Activated B cell treated with CpG ODN at 0.5 μM for 24 hours (primary cell): ENCODE measurements at regions of chr14 and their contacts with region 1.

Region 1: DNA sequence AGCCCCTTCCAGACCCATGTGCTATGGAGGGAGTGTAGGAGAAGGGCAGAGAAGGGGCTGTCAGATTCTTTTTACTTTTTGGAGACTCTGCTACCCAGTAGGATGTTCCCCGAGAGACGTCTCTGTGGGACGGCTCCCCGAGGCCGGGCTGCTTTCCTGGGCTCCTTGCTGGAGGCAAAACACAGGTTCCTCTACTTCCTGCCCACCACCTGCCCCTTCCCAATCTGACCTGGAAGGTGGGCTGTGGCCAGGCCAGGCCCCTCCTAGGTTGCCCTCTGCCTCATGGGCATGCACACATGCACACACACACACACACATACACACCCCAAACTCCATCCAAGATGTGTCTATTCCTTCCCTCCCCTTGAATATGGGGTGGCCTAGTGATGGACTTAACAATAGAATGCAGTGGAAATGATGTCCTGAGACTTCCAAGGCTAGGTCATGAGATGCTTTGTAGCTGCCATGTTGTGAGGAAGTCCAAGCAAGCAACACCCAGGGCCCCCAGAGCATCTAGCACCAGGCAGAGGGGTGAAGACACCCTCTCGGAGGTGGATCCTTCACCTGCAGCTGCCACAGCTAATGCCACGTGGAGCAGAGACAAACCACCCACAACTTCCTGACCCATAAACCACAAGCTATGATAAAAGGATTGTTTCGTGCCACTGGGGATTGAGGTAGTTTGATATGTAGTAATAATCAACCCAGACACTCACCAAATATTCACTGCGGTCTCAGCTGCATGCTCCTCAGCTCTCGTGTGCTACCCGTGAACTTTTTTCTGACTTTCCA is 1.6 kb upstream of the ASB2 start:
- DNase-seq: peak; percentile 40
- ATAC-seq: peak; percentile 84
- H3K4me3 Mint-ChIP-seq: peak overlapping the region; percentile 41
- H3K27ac Mint-ChIP-seq: peak overlapping the region; percentile 68
- H3K4me1 Mint-ChIP-seq: peaks cover 40% of the 10 kb centered on the region
- H3K27me3 Mint-ChIP-seq: peaks cover 29% of the 10 kb centered on the region
- CTCF ChIP-seq: no peak

Region 2: DNA sequence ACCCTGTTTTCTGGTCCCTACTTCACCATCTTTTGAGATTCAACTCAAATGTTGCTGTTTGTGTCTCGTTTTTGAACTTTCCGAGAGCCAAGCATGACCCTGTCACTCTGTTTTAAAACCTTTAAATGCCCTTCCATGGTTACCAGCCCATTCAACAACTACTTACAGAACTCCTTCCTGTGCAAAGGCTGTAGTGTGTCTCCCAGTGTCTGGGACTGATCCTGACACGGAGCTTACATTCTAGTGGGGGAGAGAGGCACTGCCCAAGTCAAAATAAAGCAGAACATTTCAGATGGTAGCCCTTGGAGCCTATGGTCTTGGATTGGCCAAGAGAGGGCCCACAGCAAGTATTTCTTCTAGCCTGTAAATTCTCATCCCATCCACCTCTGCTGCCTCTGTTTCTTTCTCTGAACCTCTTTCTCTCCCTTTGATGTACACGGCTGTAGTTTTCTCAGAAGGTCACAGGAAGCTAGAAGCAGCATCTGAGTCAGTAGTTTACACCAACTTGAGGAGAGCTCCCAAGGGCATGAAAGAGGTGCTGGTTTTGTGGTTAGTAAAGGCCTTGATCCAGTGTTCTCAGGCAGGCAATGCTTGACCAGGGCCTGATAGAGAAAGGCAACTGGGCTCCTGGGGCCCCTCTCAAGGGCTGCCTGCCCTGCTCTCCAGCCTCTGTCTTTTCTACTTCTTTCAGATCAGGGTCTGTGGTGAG is 1697.3 kb before region 1 on chr14:
- CTCF ChIA-PET with region 1: no interaction called
- POLR2A ChIA-PET with region 1: no interaction called
- intact Hi-C with region 1: no loop called
- DNase-seq: no peak
- ATAC-seq: no peak
- H3K4me3 Mint-ChIP-seq: no peak overlapping the region
- H3K27ac Mint-ChIP-seq: no peak overlapping the region
- H3K4me1 Mint-ChIP-seq: no peaks in the 10 kb centered on the region
- H3K27me3 Mint-ChIP-seq: peaks cover 17% of the 10 kb centered on the region
- CTCF ChIP-seq: no peak

Region 3: GRCh38 chr14:93989939-93990338 is 12.0 kb after region 1 on chr14:
- CTCF ChIA-PET with region 1: interaction called, 3 read pairs
- POLR2A ChIA-PET with region 1: interaction called, 5 read pairs
- intact Hi-C with region 1: loop called (anchors 1 kb)
- DNase-seq: no peak
- ATAC-seq: peak; percentile 70
- H3K4me3 Mint-ChIP-seq: no peak overlapping the region
- H3K27ac Mint-ChIP-seq: no peak overlapping the region
- H3K4me1 Mint-ChIP-seq: peaks cover 7% of the 10 kb centered on the region
- H3K27me3 Mint-ChIP-seq: peaks cover 24% of the 10 kb centered on the region
- CTCF ChIP-seq: no peak

Region 4: DNA sequence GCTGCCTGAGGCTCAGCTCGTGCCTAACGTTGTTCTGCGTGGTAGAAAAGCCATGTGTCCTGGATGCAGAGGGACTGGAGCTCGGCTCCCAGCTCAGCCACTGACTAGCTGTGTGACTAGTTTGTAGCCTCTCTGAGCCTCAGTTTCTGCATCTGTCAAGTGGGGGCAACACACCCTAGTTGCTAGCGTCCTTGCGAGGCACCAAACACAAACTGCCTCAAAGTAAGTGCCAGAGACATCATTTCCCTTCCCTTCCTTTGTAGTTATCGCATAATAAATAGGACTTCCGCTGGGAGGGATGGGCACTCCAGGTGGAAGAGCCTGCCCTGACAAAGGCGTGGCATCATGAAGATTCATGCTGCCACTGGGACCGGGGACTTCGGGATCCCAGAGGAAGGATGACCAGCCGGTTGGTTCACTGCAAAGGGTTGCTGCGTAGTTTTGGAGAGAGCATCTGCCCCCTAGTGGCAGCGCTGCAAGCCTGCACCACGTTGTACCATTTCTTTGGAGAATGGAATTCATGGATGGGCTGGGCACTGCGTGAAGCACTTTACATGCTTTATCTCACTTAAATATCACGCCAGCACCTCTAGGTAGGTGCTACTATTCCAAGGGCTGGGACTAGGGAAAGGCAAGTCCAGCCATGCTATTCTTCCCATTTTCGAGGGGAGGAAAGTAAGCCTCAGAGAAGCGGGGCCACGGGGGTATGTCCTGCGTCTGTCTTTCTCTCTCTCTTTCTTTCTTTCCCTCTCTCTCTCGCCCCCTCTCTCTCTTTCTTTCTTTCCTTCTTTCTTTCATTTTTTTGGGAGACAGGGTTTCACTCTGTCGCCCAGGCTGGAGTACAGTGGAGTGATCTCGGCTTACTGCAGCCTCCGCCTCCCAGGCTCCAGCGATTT is 23.8 kb after region 1 on chr14:
- CTCF ChIA-PET with region 1: interaction called, 4 read pairs
- POLR2A ChIA-PET with region 1: interaction called, 7 read pairs
- intact Hi-C with region 1: loop called (anchors 2 kb)
- DNase-seq: peak; percentile 52
- ATAC-seq: peak; percentile 89
- H3K4me3 Mint-ChIP-seq: no peak overlapping the region
- H3K27ac Mint-ChIP-seq: no peak overlapping the region
- H3K4me1 Mint-ChIP-seq: no peaks in the 10 kb centered on the region
- H3K27me3 Mint-ChIP-seq: peaks cover 27% of the 10 kb centered on the region
- CTCF ChIP-seq: peak; percentile 88

Region 5: DNA sequence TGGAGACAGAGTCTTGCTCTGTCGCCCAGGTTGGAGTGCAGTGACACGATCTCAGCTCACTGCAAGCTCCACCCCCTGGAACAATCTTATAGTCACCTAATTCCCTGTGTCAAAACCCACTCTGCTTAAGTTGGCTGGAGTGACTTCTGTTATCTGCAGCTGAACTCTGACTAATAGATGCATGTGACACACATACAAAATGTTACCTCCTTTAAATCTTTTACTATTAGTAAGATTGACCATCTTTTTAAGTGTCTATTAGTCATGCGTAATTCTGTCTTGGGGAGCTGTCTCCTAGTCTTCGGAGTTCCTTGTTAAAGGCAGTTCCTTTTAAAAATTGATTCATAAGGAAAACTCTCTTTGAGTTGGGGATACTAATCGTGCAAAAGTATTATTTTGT is 110.5 kb after region 1 on chr14:
- CTCF ChIA-PET with region 1: no interaction called
- POLR2A ChIA-PET with region 1: no interaction called
- intact Hi-C with region 1: no loop called
- DNase-seq: no peak
- ATAC-seq: no peak
- H3K4me3 Mint-ChIP-seq: no peak overlapping the region
- H3K27ac Mint-ChIP-seq: no peak overlapping the region
- H3K4me1 Mint-ChIP-seq: no peaks in the 10 kb centered on the region
- H3K27me3 Mint-ChIP-seq: no peaks in the 10 kb centered on the region
- CTCF ChIP-seq: no peak

Region 6: DNA sequence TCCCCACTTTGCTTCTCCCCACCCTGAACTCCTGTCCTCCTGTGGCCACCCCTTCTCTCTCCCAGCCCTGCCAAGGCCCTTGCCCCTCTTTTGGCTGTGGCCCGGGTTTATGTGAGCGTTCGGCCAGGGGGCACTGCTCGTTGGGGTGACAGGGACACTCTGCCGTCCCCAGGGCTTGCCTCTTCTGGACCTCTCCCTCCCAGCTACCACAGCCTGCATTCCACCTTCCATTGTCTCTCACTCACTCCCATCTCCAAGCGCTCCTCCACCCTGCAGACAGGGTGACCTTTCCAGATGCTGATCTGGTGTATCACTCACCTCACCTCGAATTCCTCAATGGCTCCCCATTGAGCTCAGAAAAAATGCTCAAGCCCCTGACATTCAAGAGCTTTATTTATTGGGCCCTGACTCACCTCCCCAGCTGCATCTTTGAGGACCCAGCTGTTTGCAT is 496.6 kb after region 1 on chr14:
- CTCF ChIA-PET with region 1: no interaction called
- POLR2A ChIA-PET with region 1: no interaction called
- intact Hi-C with region 1: no loop called
- DNase-seq: no peak
- ATAC-seq: no peak
- H3K4me3 Mint-ChIP-seq: no peak overlapping the region
- H3K27ac Mint-ChIP-seq: no peak overlapping the region
- H3K4me1 Mint-ChIP-seq: peaks cover 22% of the 10 kb centered on the region
- H3K27me3 Mint-ChIP-seq: peaks cover 3% of the 10 kb centered on the region
- CTCF ChIP-seq: no peak

Region 7: GRCh38 chr14:94612174-94612573 is 634.2 kb after region 1 on chr14 and contains the start of gene SERPINA3:
- CTCF ChIA-PET with region 1: no interaction called
- POLR2A ChIA-PET with region 1: no interaction called
- intact Hi-C with region 1: no loop called
- DNase-seq: no peak
- ATAC-seq: no peak
- H3K4me3 Mint-ChIP-seq: no peak within 1 kb of the TSS
- H3K27ac Mint-ChIP-seq: no peak within 1 kb of the TSS
- H3K4me1 Mint-ChIP-seq: no peaks in the 10 kb centered on the region
- H3K27me3 Mint-ChIP-seq: no peaks in the 10 kb centered on the region
- CTCF ChIP-seq: no peak
- total RNA-seq, gene SERPINA3: not detected in 2 replicates